ENCODE measurements at regions of chr17 and their contacts with region 1.

Region 1: GRCh38 chr17:69336571-69336970 is 9.6 kb upstream of the ABCA5 start:
- DNase-seq: no peak
- H3K4me3 ChIP-seq: no peak overlapping the region
- H3K27ac ChIP-seq: no peak overlapping the region
- H3K4me1 ChIP-seq: no peaks in the 10 kb centered on the region
- H3K27me3 ChIP-seq: no peaks in the 10 kb centered on the region
- CTCF ChIP-seq: no peak

Region 2: GRCh38 chr17:69287168-69287567 is 49.4 kb before region 1 on chr17:
- intact Hi-C with region 1: no loop called
- DNase-seq: no peak
- H3K4me3 ChIP-seq: no peak overlapping the region
- H3K27ac ChIP-seq: no peak overlapping the region
- H3K4me1 ChIP-seq: no peaks in the 10 kb centered on the region
- H3K27me3 ChIP-seq: no peaks in the 10 kb centered on the region
- CTCF ChIP-seq: no peak

Region 3: DNA sequence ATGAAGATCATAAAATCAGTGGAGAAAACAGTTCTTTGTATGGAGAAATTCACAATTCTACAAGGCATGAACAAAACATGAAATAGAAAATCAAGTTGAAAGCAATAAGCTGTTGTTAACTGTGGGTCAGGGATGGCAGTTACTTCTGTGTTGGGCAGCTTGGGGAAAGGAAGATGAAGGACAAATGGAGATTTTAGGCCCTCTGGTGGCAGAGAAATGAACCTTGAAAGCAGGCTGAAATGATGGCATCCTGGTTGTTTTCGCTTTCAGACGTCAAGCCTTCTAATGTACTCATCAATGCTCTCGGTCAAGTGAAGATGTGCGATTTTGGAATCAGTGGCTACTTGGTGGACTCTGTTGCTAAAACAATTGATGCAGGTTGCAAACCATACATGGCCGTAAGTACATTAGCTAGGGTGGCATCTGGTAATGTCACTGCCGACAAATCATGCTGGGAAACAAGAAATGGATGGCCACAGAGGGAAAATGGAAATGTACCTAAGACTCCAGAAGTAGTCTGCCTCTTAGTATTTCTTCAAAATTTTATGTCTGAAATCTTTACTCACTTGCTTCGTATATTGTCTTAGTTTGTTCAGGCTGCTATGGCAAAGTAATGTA is 186.8 kb after region 1 on chr17:
- intact Hi-C with region 1: loop called (anchors 2 kb)
- DNase-seq: peak; percentile 54
- H3K4me3 ChIP-seq: no peak overlapping the region
- H3K27ac ChIP-seq: no peak overlapping the region
- H3K4me1 ChIP-seq: no peaks in the 10 kb centered on the region
- H3K27me3 ChIP-seq: no peaks in the 10 kb centered on the region
- CTCF ChIP-seq: peak; percentile 66